ENCODE measurements at regions of chr11 and their contacts with region 1.

Region 1: DNA sequence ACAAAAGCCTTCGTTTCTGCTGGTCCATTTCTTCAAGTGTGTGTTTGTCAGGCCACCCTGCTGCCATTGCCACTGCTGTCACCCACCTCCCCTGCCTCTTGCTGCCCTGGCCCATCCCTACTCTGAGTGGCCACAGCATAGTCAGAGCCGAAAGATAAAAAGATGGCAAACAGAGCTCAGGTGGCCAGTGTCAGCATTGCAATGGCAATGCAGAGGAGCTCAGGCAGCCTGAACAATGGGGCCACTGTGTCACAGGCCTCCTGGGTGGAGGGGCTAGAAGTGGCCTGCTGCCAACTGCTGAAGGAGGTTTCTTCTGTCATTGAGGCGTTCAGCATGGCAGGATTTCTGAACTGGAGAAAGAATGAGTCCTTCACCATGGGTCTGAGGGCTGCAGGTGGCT is 137.1 kb downstream of the CSNK2A3 start:
- DNase-seq: no peak
- H3K4me3 ChIP-seq: no peak overlapping the region
- H3K27ac ChIP-seq: no peak overlapping the region
- H3K4me1 ChIP-seq: peaks cover 0 to 33% of the 10 kb centered on the region in 2 donors
- H3K27me3 ChIP-seq: no peaks in the 10 kb centered on the region
- CTCF ChIP-seq: no peak

Region 2: DNA sequence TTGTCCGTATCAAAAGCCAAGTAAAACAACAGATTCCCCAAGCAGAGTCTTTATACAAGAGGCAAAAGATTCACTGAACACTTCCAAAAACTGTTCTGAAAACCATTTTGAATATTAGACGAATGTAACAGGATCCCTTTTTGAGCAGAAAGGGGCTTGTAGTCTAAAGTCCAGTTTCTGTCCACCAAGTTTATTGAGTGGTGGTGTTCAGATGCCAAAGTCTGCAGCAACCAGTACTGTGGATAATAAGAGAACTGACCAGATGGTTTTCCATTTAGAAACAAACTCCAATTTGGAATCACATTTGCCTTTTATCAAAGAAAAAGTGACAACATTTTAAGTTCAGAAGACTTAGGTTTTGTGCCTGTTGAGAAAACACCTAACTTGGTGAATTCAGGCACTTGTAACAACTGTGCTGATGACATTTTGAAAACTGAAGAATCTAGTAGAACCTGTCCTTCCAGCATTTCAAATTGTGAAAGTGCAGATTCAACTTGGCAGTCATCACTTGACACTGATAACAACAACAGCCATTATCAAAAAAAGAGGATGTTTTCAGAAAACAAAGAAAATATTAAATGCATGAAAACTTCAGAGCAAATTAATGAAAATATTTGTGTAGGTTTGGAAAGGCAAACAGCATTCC is 80.0 kb before region 1 on chr11:
- intact Hi-C with region 1: no loop called
- DNase-seq: no peak
- H3K4me3 ChIP-seq: no peak overlapping the region
- H3K27ac ChIP-seq: no peak overlapping the region
- H3K4me1 ChIP-seq: peaks cover 5% of the 10 kb centered on the region in 2 donors
- H3K27me3 ChIP-seq: no peaks in the 10 kb centered on the region
- CTCF ChIP-seq: no peak

Region 3: GRCh38 chr11:11163236-11163635 is 52.7 kb before region 1 on chr11:
- intact Hi-C with region 1: loop called (anchors 10 kb)
- DNase-seq: no peak
- H3K4me3 ChIP-seq: no peak overlapping the region
- H3K27ac ChIP-seq: peak overlapping the region in 1 of 2 donors; percentile 25
- H3K4me1 ChIP-seq: peaks cover 0 to 12% of the 10 kb centered on the region in 2 donors
- H3K27me3 ChIP-seq: no peaks in the 10 kb centered on the region
- CTCF ChIP-seq: peak in 1 of 3 experiments; percentile 24

Region 4: GRCh38 chr11:11332141-11332710 is 116.3 kb after region 1 on chr11:
- intact Hi-C with region 1: no loop called
- DNase-seq: no peak
- H3K4me3 ChIP-seq: no peak overlapping the region
- H3K27ac ChIP-seq: no peak overlapping the region
- H3K4me1 ChIP-seq: no peaks in the 10 kb centered on the region
- H3K27me3 ChIP-seq: no peaks in the 10 kb centered on the region
- CTCF ChIP-seq: no peak